ENCODE measurements at regions of chr11 and their contacts with region 1.

Region 1: DNA sequence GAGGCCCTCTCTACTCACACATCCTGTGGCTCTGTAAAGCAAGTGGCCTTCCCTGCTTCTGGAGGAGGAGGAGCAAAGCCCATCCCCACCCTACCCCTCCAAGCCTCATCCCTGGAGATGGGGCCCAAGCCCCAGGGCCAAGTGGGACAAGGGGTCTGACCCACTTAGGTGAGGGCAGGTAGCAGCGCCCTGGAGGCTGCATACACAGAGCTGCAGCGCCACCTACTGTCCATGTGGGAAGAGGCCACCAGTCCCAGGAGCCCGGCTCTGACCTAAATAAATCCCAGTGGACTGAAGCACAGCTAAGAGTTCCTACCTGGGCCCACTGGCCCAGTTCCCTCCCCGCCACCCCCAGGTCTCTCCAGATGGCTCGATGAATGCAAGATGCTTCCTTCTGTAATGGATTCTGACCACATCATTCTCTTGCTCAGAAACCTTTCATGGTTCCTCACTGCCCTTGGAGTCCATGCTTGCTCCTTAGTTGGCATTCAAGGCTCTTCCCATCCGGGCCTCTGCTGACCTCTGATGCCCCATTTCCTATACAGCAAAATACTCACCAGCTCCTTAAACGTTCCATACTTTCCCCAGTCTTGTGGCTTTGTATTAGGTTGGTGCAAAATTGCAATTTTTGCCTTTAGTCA is 62.1 kb downstream of the THAP12 start:
- DNase-seq: peak; percentile 79 to 91
- ATAC-seq: peak; percentile 93 to 98 (median 95)
- H3K4me3 ChIP-seq: no peak overlapping the region
- H3K27ac ChIP-seq: no peak overlapping the region
- H3K4me1 ChIP-seq: no peaks in the 10 kb centered on the region
- H3K27me3 ChIP-seq: peaks cover 0 to 9% (median 0%) of the 10 kb centered on the region in 3 donors
- CTCF ChIP-seq: peak; percentile 88

Region 2: GRCh38 chr11:75721855-75722668 is 596.8 kb before region 1 on chr11:
- intact Hi-C with region 1: loop called in 1 of 2 experiments (anchors 10 kb)
- DNase-seq: no peak
- ATAC-seq: no peak
- H3K4me3 ChIP-seq: no peak overlapping the region
- H3K27ac ChIP-seq: no peak overlapping the region
- H3K4me1 ChIP-seq: no peaks in the 10 kb centered on the region
- H3K27me3 ChIP-seq: no peaks in the 10 kb centered on the region
- CTCF ChIP-seq: no peak

Region 3: DNA sequence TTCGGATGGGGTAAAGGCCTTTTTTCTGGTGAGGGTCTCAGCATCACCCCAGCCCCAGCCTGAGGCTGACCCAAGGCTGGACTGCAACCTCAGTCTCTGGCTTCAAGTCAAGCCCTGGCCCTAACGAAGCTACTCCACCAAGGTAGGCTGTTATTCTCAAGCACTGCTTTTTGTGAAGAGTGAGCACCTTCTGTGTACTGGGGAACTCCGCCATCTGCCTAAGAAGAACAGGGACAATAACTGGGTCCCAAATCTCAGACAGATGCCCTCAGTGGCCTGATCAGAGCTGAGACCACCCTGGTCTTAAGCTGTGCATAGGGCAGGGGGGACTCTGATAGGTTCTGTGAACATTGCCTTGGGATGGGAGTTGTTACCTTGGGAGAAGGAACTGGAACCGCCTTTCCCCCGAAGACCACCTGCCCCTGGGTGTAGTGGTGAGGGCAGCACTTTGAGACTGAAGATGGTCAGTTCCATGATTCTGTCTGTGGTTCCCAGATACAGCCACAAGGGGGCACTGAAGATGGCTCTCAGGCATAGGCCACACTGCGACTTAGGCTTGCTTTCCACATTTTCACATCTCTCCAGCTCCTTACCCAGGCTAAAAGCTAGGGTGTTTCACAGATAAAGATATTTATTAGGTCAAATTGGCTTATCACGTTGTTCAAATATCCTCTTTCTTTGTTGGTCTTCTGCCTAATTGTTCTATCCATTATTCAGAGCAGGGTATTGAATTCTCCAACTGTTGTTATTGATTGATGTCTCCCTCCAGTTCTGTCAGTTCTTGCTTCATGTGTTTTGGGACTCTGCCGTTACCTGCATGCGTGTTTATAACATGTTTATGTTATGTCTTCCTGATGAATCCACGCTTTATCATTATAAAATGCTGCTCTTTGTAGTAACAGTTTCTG is 515.7 kb before region 1 on chr11:
- intact Hi-C with region 1: loop called (anchors 5 to 10 kb)
- DNase-seq: peak; percentile 66 to 72
- ATAC-seq: peak; percentile 88 to 96 (median 91)
- H3K4me3 ChIP-seq: no peak overlapping the region
- H3K27ac ChIP-seq: no peak overlapping the region
- H3K4me1 ChIP-seq: peaks cover 4% of the 10 kb centered on the region
- H3K27me3 ChIP-seq: no peaks in the 10 kb centered on the region
- CTCF ChIP-seq: peak; percentile 95

Region 4: DNA sequence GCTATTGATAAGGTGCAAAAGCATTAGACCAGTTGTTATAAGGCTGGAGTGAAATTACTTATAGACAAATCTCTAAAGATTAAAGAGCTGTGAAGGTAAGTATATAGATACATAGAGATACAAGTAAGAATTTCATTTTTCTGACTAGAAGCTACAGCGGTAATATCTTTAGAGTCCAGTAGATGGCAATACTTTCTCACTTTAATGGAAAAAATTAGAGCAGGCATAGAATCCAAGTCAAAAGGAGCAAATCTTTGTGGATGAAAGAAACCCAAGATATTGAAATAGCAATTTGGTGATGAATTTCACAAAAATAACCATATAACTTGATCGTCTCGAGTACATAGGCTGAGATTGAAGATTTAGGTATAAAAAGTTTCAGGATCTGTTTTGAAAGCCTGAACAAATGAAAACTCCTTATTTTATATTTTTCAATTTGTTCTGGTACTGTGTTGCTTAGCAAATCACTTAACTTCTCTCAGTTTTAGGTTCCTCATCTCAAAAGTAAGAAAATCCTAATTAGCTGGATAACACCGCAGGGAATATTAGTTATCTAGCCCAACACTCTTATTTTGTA is 421.9 kb before region 1 on chr11:
- intact Hi-C with region 1: loop called (anchors 5 kb)
- DNase-seq: no peak
- ATAC-seq: peak in 3 of 4 donors; percentile 48 to 76 (median 54)
- H3K4me3 ChIP-seq: no peak overlapping the region
- H3K27ac ChIP-seq: no peak overlapping the region
- H3K4me1 ChIP-seq: no peaks in the 10 kb centered on the region
- H3K27me3 ChIP-seq: no peaks in the 10 kb centered on the region
- CTCF ChIP-seq: peak; percentile 74

Region 5: GRCh38 chr11:76166314-76166713 is 152.6 kb before region 1 on chr11:
- intact Hi-C with region 1: no loop called
- DNase-seq: peak in 1 of 2 donors; percentile 36
- ATAC-seq: no peak
- H3K4me3 ChIP-seq: no peak overlapping the region
- H3K27ac ChIP-seq: no peak overlapping the region
- H3K4me1 ChIP-seq: peaks cover 8% of the 10 kb centered on the region
- H3K27me3 ChIP-seq: no peaks in the 10 kb centered on the region
- CTCF ChIP-seq: no peak

Region 6: GRCh38 chr11:76371170-76371569 is 52.3 kb after region 1 on chr11:
- intact Hi-C with region 1: loop called in 1 of 2 experiments (anchors 2 kb)
- DNase-seq: no peak
- ATAC-seq: no peak
- H3K4me3 ChIP-seq: no peak overlapping the region
- H3K27ac ChIP-seq: no peak overlapping the region
- H3K4me1 ChIP-seq: peaks cover 47% of the 10 kb centered on the region
- H3K27me3 ChIP-seq: no peaks in the 10 kb centered on the region
- CTCF ChIP-seq: no peak

Region 7: GRCh38 chr11:76426660-76427059 is 107.8 kb after region 1 on chr11:
- intact Hi-C with region 1: no loop called
- DNase-seq: no peak
- ATAC-seq: no peak
- H3K4me3 ChIP-seq: no peak overlapping the region
- H3K27ac ChIP-seq: no peak overlapping the region
- H3K4me1 ChIP-seq: no peaks in the 10 kb centered on the region
- H3K27me3 ChIP-seq: no peaks in the 10 kb centered on the region
- CTCF ChIP-seq: no peak